CD8-positive, alpha-beta memory T cell (primary cell): ENCODE measurements at regions of chr11 and their contacts with region 1.

Region 1: GRCh38 chr11:83156150-83156995 is 558 bp upstream of the PCF11 start:
- DNase-seq: peak; percentile 96 to 99 (median 97)
- H3K4me3 ChIP-seq: peak overlapping the region; percentile 94
- H3K4me3 Mint-ChIP-seq: peak overlapping the region; percentile 98 to 100 (median 100)
- H3K27ac ChIP-seq: peak overlapping the region; percentile 99
- H3K27ac Mint-ChIP-seq: peak overlapping the region; percentile 99 to 100 (median 100)
- H3K4me1 ChIP-seq: peaks cover 11% of the 10 kb centered on the region
- H3K4me1 Mint-ChIP-seq: peaks cover 25 to 34% (median 28%) of the 10 kb centered on the region in 3 donors
- H3K27me3 ChIP-seq: no peaks in the 10 kb centered on the region
- H3K27me3 Mint-ChIP-seq: peaks cover 0 to 6% of the 10 kb centered on the region in 2 donors

Region 2: GRCh38 chr11:82900277-82901164 is 255.9 kb before region 1 on chr11 and contains the start of gene PRCP:
- CTCF ChIA-PET with region 1: interaction called, 8 read pairs
- POLR2A ChIA-PET with region 1: interaction called, 56 read pairs
- DNase-seq: peak; percentile 91 to 95 (median 91)
- H3K4me3 ChIP-seq: peak within 1 kb of the TSS; percentile 90
- H3K4me3 Mint-ChIP-seq: peak within 1 kb of the TSS; percentile 89 to 100 (median 97)
- H3K27ac ChIP-seq: peak within 1 kb of the TSS; percentile 96
- H3K27ac Mint-ChIP-seq: peak within 1 kb of the TSS; percentile 98 to 100 (median 100)
- H3K4me1 ChIP-seq: peaks cover 18% of the 10 kb centered on the region
- H3K4me1 Mint-ChIP-seq: peaks cover 41 to 54% (median 54%) of the 10 kb centered on the region in 3 donors
- H3K27me3 ChIP-seq: no peaks in the 10 kb centered on the region
- H3K27me3 Mint-ChIP-seq: no peaks in the 10 kb centered on the region
- total RNA-seq, gene PRCP: 26.5 to 27.1 TPM

Region 3: DNA sequence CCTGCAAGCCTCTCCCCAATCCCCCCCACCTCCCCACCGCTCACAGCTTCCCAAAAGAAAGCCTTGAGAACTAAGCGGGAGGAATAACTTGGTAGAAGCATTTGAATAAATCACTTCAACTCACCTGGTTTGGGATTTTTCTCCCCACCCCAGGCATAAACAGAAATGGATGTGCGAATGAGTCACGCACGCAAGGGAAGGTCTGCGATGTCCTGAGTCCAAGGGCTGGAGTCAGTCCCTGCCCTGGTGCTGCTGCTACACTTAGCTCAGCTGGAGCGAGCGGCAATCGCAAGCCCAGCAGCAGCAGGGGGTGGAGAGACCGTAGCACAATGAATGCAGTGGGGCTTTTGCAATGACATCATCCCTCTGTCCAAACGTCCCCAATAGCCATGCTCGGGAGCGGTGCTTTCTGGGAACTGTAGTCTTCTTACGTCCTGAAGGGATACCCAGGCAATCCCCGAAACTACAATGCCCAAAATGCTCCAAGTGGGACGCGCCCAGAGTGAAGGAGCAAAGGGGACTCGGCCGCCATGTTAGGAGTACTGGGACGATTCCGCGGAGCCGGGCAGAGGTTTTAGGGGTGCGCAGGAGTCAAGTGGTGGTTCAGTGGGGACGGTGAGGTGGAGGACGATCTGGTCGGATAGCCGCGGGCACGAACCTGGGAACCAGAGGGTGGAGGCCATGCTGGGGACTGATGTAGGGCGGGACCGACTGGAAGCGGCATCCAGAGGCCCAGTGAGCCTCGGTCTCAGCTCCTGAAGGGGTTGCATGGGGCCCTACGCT is 84.6 kb before region 1 on chr11 and contains the start of gene RAB30:
- CTCF ChIA-PET with region 1: interaction called, 4 read pairs
- POLR2A ChIA-PET with region 1: interaction called, 34 read pairs
- DNase-seq: peak; percentile 88 to 97 (median 93)
- H3K4me3 ChIP-seq: peak within 1 kb of the TSS; percentile 82
- H3K4me3 Mint-ChIP-seq: no peak within 1 kb of the TSS
- H3K27ac ChIP-seq: peak within 1 kb of the TSS; percentile 91
- H3K27ac Mint-ChIP-seq: no peak within 1 kb of the TSS
- H3K4me1 ChIP-seq: peaks cover 40% of the 10 kb centered on the region
- H3K4me1 Mint-ChIP-seq: peaks cover 0 to 33% (median 19%) of the 10 kb centered on the region in 3 donors
- H3K27me3 ChIP-seq: no peaks in the 10 kb centered on the region
- H3K27me3 Mint-ChIP-seq: no peaks in the 10 kb centered on the region
- total RNA-seq, gene RAB30: 15.7 to 17.1 TPM

Region 4: GRCh38 chr11:83187465-83187864 is 31.1 kb after region 1 on chr11:
- CTCF ChIA-PET with region 1: interaction called, 4 read pairs
- POLR2A ChIA-PET with region 1: interaction called, 16 read pairs
- DNase-seq: no peak
- H3K4me3 ChIP-seq: no peak overlapping the region
- H3K4me3 Mint-ChIP-seq: peak overlapping the region in 1 of 7 donors; percentile 42
- H3K27ac ChIP-seq: no peak overlapping the region
- H3K27ac Mint-ChIP-seq: peak overlapping the region in 5 of 8 donors; percentile 17 to 85 (median 76)
- H3K4me1 ChIP-seq: peaks cover 7% of the 10 kb centered on the region
- H3K4me1 Mint-ChIP-seq: peaks cover 22 to 35% (median 22%) of the 10 kb centered on the region in 3 donors
- H3K27me3 ChIP-seq: no peaks in the 10 kb centered on the region
- H3K27me3 Mint-ChIP-seq: no peaks in the 10 kb centered on the region

Region 5: DNA sequence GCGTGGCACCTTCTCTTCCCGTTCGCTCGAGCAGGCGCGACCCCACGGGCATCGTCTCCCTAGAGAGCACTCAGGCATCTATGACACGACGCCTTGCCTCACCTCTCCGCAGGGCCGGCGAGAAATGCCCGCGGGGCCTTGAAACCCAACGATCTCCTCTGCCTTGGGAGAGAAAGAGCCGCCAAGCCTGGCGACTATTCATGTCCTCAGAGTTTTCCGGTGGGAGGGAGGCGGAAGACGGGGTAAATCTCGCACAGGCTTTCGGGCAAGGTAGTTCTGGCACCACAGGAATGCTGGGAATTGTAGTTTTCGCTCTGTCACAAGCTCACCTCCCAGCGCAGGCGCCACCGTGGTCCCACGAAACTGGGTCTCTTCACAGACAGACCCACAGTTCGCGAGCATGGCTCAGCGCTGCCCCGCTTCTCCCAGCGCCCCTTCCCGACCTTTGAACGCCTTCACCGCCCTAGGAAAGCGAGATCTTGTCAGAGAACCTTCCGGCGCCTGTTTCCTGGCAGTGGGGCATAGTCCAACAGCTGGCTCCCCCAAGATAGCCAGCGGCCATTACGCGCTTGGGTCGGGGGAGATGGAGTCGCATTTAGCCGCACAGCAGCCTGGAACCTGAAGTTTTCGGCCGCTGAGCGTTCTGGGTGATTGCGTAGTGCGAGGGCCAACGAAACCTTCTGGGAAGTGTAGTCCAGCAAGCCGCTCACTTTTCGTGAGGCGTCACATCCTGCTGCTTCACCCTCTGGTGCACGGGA is 129.6 kb after region 1 on chr11 and contains the start of gene CCDC90B:
- CTCF ChIA-PET with region 1: interaction called, 5 read pairs
- POLR2A ChIA-PET with region 1: interaction called, 17 read pairs
- DNase-seq: peak; percentile 87 to 98 (median 95)
- H3K4me3 ChIP-seq: peak within 1 kb of the TSS; percentile 84
- H3K4me3 Mint-ChIP-seq: peak within 1 kb of the TSS; percentile 97 to 99 (median 98)
- H3K27ac ChIP-seq: peak within 1 kb of the TSS; percentile 93
- H3K27ac Mint-ChIP-seq: peak within 1 kb of the TSS; percentile 97 to 100 (median 100)
- H3K4me1 ChIP-seq: peaks cover 25% of the 10 kb centered on the region
- H3K4me1 Mint-ChIP-seq: peaks cover 40 to 55% (median 42%) of the 10 kb centered on the region in 3 donors
- H3K27me3 ChIP-seq: no peaks in the 10 kb centered on the region
- H3K27me3 Mint-ChIP-seq: peaks cover 3 to 6% of the 10 kb centered on the region in 2 donors
- total RNA-seq, gene CCDC90B: 36.7 to 40.6 TPM